Astrocyte of the cerebellum (primary cell): ENCODE measurements at regions of chr6 and their contacts with region 1.

Region 1: DNA sequence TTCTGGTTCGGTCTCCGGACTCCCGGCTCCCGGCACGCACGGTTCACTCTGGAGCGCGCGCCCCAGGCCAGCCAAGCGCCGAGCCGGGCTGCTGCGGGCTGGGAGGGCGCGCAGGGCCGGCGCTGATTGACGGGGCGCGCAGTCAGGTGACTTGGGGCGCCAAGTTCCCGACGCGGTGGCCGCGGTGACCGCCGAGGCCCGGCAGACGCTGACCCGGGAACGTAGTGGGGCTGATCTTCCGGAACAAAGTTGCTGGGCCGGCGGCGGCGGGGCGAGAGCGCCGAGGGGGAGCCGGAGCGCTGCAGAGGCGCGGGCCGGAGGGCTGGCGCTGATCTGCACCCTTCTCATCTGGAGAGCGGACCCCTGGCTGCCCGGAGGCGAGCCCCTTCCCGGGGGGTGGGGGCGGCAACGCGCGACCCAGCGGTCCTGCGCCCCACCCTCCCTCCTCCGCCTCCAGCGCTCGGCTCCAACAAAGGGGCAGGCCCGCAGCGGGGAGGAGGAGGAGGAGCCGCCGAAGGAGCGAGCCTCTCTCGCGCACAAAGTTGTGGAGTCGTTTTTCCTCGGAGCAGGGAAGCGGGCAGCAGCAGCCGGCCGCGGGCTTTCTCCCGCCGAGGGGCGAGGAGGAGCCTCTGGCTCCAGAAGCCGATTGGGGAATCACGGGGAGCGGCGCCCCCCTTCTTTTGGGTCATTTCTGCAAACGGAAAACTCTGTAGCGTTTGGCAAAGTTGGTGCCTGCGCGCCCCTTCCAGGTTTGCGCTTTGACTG is at the start of gene UTRN:
- DNase-seq: no peak
- H3K4me3 ChIP-seq: peak within 1 kb of the TSS; percentile 82
- CTCF ChIP-seq: no peak

Region 2: DNA sequence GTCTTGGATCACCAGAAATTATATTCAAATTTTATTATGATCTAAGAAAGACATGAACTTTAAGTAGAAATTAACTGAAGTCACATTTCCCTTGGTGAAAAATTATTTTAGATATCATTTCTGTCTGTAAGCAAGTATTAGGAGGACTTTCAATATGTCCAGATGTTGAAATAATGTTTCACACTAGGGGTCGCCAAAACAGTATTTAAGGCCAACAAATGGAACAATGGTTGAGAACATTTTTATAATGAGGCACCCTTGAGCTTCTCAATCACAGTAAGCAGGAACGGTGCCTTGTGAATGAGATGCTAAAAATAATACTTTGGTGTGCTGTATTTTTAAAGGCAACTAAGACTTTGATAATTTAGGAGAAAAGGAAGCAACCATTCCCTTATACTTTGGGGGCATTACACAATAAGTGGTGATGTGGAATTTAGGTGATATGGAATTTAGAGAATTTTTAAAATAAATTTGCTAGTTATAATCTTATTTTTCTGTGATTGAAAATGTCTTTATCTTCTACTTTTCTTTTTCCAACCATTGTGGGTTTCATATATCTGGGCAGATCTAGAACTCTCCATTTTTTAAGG is 180.0 kb before region 1 on chr6:
- in situ Hi-C with region 1: loop called (anchors 25 kb)
- DNase-seq: peak; percentile 77
- H3K4me3 ChIP-seq: no peak overlapping the region
- CTCF ChIP-seq: peak; percentile 44

Region 3: GRCh38 chr6:144335926-144336325 is 51.0 kb after region 1 on chr6:
- in situ Hi-C with region 1: loop called (anchors 5 kb)
- DNase-seq: no peak
- H3K4me3 ChIP-seq: no peak overlapping the region
- CTCF ChIP-seq: no peak